OCI-LY7 (cell line): ENCODE measurements at regions of chrX and their contacts with region 1.

Region 1: GRCh38 chrX:103214870-103215424 is at the start of gene BEX4:
- DNase-seq: no peak
- H3K4me3 ChIP-seq: no peak within 1 kb of the TSS
- H3K27ac ChIP-seq: no peak within 1 kb of the TSS
- H3K4me1 ChIP-seq: no peaks in the 10 kb centered on the region
- CTCF ChIP-seq: no peak
- total RNA-seq, gene BEX4: not detected in 2 replicates

Region 2: DNA sequence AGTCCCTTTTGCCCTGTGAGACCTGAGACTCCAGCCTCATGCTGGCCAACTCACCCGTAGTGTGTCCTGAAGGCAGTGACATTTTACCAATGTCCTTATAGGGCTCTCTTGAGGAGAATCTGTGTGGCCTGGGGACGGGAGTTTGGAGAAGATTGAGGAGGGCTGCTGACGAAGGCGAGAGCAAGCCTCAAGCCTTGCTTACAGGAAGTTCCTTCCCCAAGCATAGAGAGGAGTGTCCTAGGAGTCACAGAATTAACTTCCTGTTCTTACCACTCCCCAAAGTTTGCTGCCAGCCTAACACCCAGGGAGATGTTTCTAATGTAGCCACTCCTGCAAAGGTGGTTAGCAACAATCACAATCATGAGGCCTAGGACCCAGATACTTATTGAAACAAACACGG is 122.0 kb before region 1 on chrX and contains the start of gene NXF3:
- CTCF ChIA-PET with region 1: no interaction called
- POLR2A ChIA-PET with region 1: no interaction called
- intact Hi-C with region 1: no loop called
- DNase-seq: no peak
- H3K4me3 ChIP-seq: no peak within 1 kb of the TSS
- H3K27ac ChIP-seq: no peak within 1 kb of the TSS
- H3K4me1 ChIP-seq: no peaks in the 10 kb centered on the region
- CTCF ChIP-seq: no peak
- total RNA-seq, gene NXF3: not detected in 2 replicates

Region 3: DNA sequence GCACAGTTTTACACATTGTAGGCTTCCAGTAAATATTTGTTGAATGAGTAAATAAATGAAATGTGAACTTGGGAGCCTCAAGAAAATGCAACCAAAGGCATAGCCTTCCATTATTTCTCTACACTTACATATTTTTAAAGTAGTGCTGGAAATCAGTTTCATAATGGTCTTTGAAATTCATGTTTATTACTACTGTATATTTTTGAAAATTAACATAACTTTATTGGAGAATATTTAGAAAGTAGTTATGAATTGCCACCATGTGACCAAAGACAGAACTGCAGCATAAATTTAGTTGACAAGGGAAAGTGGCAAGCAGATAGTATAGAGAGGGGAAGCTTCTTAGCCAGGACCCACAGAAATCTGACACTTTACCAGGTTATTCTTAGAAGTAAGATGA is 33.6 kb after region 1 on chrX:
- CTCF ChIA-PET with region 1: no interaction called
- POLR2A ChIA-PET with region 1: no interaction called
- intact Hi-C with region 1: loop called (anchors 5 kb)
- DNase-seq: peak; percentile 22
- H3K4me3 ChIP-seq: no peak overlapping the region
- H3K27ac ChIP-seq: no peak overlapping the region
- H3K4me1 ChIP-seq: peaks cover 4% of the 10 kb centered on the region
- CTCF ChIP-seq: peak; percentile 71